Body of pancreas (tissue), 4 donors: ENCODE measurements at regions of chr21 and their contacts with region 1.

Region 1: DNA sequence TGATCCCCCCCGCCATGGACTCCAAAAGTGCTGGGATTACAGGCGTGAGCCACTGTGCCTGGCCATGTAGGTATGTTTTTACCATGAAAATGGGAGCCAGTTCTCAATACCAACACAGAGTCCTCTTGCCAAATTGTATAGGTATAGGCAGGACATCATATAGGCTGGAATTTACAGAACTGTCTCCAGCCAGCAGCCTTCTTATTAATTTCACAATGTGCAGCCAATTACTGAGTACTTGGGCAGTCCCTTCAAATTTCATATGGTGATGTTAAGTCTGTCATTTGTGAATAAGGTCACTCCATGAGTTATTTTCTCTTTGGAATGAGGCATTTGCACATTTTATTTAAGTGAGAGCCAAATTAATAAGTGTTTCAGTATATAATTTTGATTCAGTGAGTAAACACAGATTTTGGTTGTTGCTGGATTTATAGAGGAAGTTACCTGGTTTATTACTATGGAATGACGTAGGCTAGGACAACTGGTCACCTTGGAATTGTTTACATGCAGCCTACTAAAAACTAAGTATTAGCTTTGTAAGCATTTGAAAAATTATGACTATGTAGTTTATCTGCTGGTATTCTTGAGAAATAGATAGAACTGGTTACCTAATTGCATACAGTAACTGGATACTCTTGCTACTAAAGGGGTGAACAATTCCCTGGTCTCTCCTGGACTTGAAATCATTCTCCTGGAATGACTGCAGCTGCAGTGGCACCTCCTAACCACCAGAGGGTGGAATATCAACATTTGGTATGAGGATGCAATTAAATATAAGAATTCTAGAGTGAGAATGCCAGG is 3.1 kb upstream of the KRTAP27-1 start:
- DNase-seq: peak; percentile 43 to 70 (median 57)
- ATAC-seq: peak; percentile 35
- H3K4me3 ChIP-seq: no peak overlapping the region
- H3K27ac ChIP-seq: no peak overlapping the region
- H3K4me1 ChIP-seq: no peaks in the 10 kb centered on the region
- H3K27me3 ChIP-seq: no peaks in the 10 kb centered on the region
- CTCF ChIP-seq: peak; percentile 67 to 88 (median 81)
- POLR2A ChIP-seq: no peak

Region 2: GRCh38 chr21:29616352-29616751 is 724.3 kb before region 1 on chr21:
- intact Hi-C with region 1: no loop called
- DNase-seq: no peak
- ATAC-seq: no peak
- H3K4me3 ChIP-seq: no peak overlapping the region
- H3K27ac ChIP-seq: no peak overlapping the region
- H3K4me1 ChIP-seq: no peaks in the 10 kb centered on the region
- H3K27me3 ChIP-seq: no peaks in the 10 kb centered on the region
- CTCF ChIP-seq: no peak
- POLR2A ChIP-seq: no peak

Region 3: DNA sequence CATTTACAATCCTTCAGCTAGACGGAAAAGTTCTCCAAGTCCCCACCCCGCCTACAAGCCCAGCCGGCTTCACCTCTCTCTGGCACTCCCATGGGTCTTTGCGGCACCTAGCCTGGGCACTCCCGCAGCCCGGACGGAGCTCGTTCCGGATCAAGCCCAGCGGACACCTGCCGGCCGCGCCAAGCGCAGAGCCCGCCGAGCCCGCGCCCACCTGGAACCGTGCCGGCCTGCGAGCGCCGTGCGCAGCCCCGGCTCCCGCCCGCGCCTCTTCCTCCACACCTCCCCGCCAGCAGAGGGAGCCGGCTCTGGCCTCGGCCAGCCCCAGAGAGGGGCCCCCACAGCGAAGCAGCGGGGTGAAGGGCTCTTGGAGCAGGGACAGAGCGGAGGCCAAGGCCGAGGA is 747.7 kb after region 1 on chr21:
- intact Hi-C with region 1: loop called (anchors 5 kb)
- DNase-seq: no peak
- ATAC-seq: no peak
- H3K4me3 ChIP-seq: no peak overlapping the region
- H3K27ac ChIP-seq: no peak overlapping the region
- H3K4me1 ChIP-seq: no peaks in the 10 kb centered on the region
- H3K27me3 ChIP-seq: no peaks in the 10 kb centered on the region
- CTCF ChIP-seq: no peak
- POLR2A ChIP-seq: no peak